Aorta (tissue), 5 donors: ENCODE measurements at regions of chr12 and their contacts with region 1.

Region 1: DNA sequence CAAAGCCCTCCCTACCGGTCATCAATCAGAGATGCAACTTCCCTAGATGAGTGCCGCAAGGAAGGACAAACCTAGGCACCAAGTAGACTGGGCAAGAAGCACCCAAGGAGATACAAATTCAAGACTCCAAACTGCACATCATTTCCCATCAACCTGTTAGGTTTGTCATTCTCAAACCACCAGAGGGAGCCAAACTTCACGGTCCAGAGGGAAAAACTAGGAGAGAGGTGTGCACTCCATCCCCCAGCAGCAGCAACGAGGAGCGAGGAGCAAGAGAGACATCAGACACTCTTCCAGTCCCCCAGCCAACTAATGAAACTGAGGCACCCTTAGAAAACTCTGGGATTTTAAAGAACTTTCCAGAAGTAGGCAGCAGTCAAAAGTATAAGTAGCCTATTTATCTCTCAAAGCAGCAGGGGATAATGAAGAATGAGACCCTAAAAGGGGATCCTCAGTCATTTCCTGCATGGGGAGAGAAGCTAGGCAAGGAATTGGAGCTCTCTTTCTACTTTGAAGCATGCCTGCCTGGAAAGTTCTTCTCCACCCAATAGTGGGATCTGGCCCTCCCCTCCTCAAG is 37.0 kb upstream of the NT5DC3 start:
- DNase-seq: no peak
- ATAC-seq: peak; percentile 43
- H3K4me3 ChIP-seq: no peak overlapping the region
- H3K27ac ChIP-seq: no peak overlapping the region
- H3K4me1 ChIP-seq: no peaks in the 10 kb centered on the region
- H3K27me3 ChIP-seq: no peaks in the 10 kb centered on the region

Region 2: DNA sequence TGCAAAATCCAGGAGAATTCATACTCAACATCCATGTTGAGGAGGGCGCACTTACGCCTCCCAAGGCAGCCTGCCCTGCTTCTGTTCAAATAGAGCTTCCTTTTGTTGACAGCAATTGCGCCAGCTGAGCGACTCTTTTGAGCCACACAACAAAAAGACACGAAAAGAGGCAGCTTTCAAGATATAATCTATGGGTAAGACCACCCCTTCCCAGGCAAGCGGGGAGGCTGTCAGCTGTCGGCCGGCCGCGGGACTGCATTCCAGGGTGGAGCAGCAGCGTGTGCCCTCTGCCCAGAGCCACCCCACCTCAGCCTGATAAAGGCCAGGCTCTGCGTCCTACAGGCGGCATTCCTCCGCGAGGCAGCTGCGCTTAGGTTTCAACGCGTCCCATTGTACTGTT is 306.7 kb before region 1 on chr12:
- intact Hi-C with region 1: loop called in 1 of 2 experiments (anchors 10 kb)
- DNase-seq: no peak
- ATAC-seq: no peak
- H3K4me3 ChIP-seq: no peak overlapping the region
- H3K27ac ChIP-seq: no peak overlapping the region
- H3K4me1 ChIP-seq: no peaks in the 10 kb centered on the region
- H3K27me3 ChIP-seq: no peaks in the 10 kb centered on the region

Region 3: DNA sequence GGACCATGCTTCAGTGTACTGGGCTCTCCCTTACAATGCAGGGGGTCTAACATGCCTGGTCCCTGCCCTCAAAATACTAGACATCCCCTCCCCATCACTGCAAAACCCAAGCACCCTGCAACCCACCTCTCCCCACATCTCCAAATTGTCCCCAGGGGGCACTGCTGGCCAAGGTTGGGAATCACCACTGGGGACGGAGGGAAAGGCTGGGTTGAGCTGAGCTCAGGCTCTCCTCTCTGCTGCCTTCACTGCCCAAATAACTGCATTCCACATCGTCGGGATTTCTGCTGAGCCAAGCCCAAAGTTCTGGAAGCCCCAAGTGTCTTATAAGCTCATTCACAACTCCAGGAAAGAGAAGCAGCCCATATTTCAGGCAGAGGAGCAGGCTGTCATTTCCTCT is 106.6 kb before region 1 on chr12:
- intact Hi-C with region 1: loop called in 1 of 2 experiments (anchors 5 kb)
- DNase-seq: no peak
- ATAC-seq: peak; percentile 80
- H3K4me3 ChIP-seq: no peak overlapping the region
- H3K27ac ChIP-seq: no peak overlapping the region
- H3K4me1 ChIP-seq: no peaks in the 10 kb centered on the region
- H3K27me3 ChIP-seq: no peaks in the 10 kb centered on the region

Region 4: DNA sequence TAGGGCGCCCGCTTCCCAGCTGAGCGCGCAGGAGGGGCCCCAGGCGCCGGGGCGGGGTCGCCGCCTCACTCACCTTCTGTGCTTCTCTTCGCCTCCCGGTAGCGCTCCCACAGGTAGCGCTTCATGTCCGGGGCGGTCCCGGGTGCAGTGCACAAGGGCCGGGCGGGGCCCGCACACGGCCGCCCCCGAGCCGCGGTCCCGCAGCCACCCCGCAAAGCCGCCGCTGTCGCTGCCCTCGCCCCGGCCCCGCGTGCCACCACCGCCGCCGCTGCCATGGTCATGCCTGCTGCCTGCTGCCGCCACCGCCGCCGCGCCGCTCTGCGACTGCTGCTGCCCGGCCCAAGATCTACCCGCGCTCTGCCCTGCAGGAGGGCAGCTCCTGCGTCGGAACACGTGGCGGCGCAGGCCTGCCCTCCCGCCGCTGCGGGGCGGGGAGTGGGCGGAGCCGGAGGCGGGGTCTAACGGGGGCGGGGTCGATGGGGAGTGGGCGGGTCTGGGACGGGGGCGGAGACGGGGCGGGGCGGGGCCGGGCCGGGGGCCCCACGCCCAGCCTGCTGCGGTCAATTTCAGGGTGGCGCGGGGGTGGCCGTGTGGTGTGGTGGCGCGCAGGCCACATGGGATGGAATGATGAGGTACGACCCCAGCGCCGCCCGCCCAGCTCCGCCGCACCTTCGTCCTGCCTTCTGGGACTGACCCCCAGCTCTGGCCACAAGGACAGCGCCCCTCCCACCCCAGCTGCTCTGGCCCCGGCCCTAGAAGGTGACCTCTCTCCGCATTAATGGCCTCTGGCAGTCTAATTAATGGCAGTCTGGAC is 36.9 kb before region 1 on chr12 and contains the start of gene NT5DC3:
- intact Hi-C with region 1: no loop called
- DNase-seq: peak; percentile 88 to 95
- ATAC-seq: peak; percentile 95
- H3K4me3 ChIP-seq: peak within 1 kb of the TSS; percentile 96 to 97
- H3K27ac ChIP-seq: peak within 1 kb of the TSS; percentile 78 to 88
- H3K4me1 ChIP-seq: no peaks in the 10 kb centered on the region
- H3K27me3 ChIP-seq: no peaks in the 10 kb centered on the region
- total RNA-seq, gene NT5DC3: 28.1 to 104 TPM

Region 5: DNA sequence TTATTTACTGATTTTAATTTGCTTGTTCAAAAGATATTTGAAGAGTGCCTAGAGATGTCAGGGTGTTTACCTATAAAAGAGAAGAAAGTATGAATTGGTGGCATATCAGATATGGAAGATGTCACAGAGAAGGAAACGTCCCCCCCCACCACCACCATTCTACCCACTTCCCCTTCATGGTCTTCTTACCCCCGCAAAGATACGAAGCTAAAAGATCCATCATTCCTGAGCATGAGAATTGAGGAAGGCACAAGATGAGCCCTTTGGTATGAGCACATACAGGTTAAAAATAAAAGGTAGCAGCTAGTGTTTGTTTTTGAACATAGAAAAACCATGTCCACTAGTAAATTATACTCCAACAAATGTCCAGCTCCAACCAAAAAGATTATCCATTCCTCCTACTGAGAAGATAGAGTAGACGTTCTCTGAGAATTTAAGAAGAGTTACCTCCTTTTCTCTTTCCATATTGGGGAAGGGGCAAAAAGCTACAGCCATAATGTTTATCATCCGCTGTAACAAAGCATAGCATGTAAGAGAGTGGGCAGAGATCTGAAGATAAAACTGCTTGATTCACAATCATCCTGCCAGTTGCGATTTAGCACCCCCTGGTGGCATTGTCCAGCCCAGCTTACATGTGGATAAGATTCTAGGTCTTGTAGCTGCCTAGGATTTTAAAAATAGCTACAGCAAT is 230.9 kb after region 1 on chr12:
- intact Hi-C with region 1: loop called (anchors 2 to 5 kb)
- DNase-seq: peak; percentile 89 to 92
- ATAC-seq: peak; percentile 86
- H3K4me3 ChIP-seq: no peak overlapping the region
- H3K27ac ChIP-seq: no peak overlapping the region
- H3K4me1 ChIP-seq: no peaks in the 10 kb centered on the region
- H3K27me3 ChIP-seq: no peaks in the 10 kb centered on the region